GM13977 (cell line): ENCODE measurements at regions of chr9 and their contacts with region 1.

Region 1: GRCh38 chr9:110152704-110153374 is 55.1 kb downstream of the C9orf152 start:
- DNase-seq: peak; percentile 27
- CTCF ChIP-seq: peak; percentile 74

Region 2: DNA sequence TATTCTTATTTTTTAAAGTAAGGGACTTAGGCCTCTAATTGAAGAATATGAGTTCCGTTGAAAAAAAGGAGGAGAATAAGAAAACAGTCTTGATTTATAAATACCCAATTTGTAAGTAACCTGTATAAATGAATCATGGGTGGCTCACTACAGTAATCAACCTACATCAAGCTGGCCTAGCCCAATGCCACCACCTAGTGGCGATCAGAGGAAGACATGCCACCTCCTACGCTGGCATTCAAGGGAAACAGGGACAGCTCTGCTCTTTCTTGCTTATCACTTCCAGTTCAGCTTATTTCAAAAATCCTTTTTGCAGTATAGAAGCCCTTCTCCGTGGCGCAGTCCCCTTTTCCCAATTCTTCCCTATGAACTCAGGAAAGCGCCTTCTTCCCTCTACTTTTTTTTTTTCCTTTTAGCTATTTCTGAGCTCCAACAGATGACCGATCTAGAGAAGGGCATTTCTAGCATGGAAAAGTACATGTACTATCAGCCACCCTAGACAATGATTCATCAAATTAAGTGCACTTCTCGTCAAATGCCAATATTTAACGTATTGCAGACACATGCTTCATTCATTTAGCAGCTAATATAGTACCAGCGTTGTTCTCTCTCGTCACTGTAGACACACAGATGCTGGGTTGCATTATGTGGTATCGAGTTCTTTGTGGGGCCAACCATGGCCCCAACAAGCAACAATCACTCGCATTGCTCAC is 683.0 kb before region 1 on chr9:
- in situ Hi-C with region 1: no loop called
- DNase-seq: peak; percentile 73
- CTCF ChIP-seq: peak; percentile 85

Region 3: DNA sequence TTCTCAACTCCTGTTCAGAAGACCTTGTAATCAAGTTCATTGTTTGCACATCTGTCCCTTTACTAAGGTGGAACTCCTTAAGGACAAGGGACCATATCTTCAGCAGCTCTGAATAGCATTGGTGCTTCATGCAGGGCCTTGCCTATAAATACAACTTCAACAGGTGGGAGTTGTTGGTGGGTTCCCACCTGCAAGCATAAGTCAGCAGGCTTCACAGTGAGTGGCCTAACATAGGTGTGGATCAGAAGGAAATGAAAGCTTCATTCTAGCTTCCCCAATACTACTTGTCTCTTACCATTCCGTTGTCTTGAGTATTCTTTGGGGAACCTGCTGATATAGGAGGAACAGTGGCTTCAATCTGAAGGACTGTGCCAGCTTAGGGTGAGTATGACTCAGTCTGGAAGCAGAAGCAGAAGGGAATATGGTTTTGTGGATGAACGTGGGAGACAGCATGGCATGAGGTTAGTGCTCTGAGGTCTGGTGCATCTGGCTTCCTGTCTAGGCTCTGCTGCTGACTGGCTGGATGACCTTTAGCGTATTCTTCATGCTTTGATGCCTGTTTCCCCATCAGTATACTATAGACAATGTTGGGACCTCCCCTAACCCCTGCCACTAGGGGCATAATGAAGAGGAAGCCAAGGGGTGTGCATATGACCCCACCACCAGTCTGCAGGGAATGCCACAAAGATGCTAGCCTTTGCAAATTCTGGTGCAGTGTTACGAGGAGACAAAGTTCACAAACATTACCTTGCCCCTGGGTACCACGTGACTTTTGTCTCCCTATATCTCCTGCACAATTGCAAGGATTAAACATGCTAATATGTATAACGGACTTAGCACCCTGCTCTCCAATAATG is 180.6 kb before region 1 on chr9:
- in situ Hi-C with region 1: loop called (anchors 10 kb)
- DNase-seq: no peak
- CTCF ChIP-seq: peak; percentile 41